ENCODE measurements at regions of chr6 and their contacts with region 1.

Region 1: GRCh38 chr6:110039364-110039980 is 61.4 kb downstream of the GPR6 start:
- DNase-seq: peak; percentile 65 to 90 (median 80)
- ATAC-seq: peak; percentile 78 to 84
- H3K4me3 Mint-ChIP-seq: peak overlapping the region; percentile 89 to 97 (median 92)
- H3K27ac Mint-ChIP-seq: peak overlapping the region; percentile 86 to 98 (median 94)
- H3K4me1 Mint-ChIP-seq: peaks cover 12 to 35% (median 19%) of the 10 kb centered on the region in 4 donors
- H3K27me3 Mint-ChIP-seq: no peaks in the 10 kb centered on the region

Region 2: DNA sequence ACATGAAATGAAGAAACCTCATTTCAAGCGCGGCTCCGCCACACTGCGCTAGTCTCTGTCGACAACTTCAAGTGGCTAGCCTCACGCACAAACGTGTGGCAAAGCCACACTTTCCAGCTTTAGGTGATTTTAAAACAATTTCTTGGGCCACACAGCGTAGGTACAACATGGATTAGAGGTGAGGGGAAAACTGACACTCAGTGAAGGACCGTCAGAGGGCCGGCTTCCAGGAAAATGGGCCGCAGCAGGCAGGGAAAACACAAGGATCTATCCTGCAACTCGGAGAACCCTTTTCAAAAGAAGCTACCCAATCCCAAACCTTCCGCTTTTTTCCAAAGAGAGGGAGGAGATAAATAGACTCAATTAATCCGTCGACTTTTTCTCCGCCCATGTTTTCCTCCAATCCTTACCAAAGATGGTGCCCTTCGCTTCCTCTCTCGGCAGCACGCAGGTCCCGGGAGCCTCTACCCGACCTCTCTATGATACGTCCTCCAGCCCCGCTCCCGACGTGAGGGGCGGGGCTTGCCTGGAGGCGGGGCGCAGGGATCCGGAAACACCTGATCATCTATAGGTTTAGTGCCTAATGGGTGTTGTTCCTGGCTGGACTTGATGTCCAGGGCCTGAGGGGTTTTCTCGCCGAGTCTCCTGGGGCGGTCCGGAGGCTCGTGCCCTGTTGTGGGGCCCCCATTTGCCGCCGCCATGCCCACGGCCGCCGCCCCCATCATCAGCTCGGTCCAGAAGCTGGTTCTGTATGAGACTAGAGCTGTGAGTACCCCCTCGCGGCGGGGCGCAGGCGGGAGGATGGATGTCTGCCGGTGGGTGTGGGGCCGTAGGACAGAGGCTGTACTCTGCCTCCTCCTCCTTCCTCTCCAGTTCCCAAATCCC is 348.5 kb before region 1 on chr6 and contains the starts of genes AK9 and FIG4:
- POLR2A ChIA-PET with region 1: interaction called, 17 read pairs
- DNase-seq: peak; percentile 78 to 93 (median 85)
- ATAC-seq: peak; percentile 94 to 95
- H3K4me3 Mint-ChIP-seq: peak within 1 kb of the TSS; percentile 88 to 99 (median 96)
- H3K27ac Mint-ChIP-seq: peak within 1 kb of the TSS; percentile 92 to 99 (median 97)
- H3K4me1 Mint-ChIP-seq: peaks cover 10 to 43% (median 33%) of the 10 kb centered on the region in 4 donors
- H3K27me3 Mint-ChIP-seq: no peaks in the 10 kb centered on the region
- polyA plus RNA-seq, gene AK9: 4.3 to 7.4 (median 5.9) TPM
- polyA plus RNA-seq, gene FIG4: 14.1 to 18.7 (median 16.7) TPM

Region 3: GRCh38 chr6:110128418-110128817 is 88.9 kb after region 1 on chr6:
- POLR2A ChIA-PET with region 1: no interaction called
- DNase-seq: no peak
- ATAC-seq: no peak
- H3K4me3 Mint-ChIP-seq: no peak overlapping the region
- H3K27ac Mint-ChIP-seq: no peak overlapping the region
- H3K4me1 Mint-ChIP-seq: peaks cover 0 to 6% (median 0%) of the 10 kb centered on the region in 4 donors
- H3K27me3 Mint-ChIP-seq: no peaks in the 10 kb centered on the region